ENCODE measurements at regions of chr19 and their contacts with region 1.

Region 1: GRCh38 chr19:2618611-2619010 is 83.9 kb downstream of the GNG7 start:
- DNase-seq: no peak
- ATAC-seq: peak in 1 of 2 experiments; percentile 53; a peak in 2 of 6 replicates
- H3K4me3 ChIP-seq: no peak overlapping the region
- H3K27ac ChIP-seq: peak overlapping the region in 1 of 2 experiments; percentile 28; a peak in 1 of 6 replicates
- H3K4me1 ChIP-seq: peaks cover 5% of the 10 kb centered on the region
- CTCF ChIP-seq: no peak
- EP300 ChIP-seq: no peak
- POLR2A ChIP-seq: no peak
- RAD21 ChIP-seq: no peak

Region 2: DNA sequence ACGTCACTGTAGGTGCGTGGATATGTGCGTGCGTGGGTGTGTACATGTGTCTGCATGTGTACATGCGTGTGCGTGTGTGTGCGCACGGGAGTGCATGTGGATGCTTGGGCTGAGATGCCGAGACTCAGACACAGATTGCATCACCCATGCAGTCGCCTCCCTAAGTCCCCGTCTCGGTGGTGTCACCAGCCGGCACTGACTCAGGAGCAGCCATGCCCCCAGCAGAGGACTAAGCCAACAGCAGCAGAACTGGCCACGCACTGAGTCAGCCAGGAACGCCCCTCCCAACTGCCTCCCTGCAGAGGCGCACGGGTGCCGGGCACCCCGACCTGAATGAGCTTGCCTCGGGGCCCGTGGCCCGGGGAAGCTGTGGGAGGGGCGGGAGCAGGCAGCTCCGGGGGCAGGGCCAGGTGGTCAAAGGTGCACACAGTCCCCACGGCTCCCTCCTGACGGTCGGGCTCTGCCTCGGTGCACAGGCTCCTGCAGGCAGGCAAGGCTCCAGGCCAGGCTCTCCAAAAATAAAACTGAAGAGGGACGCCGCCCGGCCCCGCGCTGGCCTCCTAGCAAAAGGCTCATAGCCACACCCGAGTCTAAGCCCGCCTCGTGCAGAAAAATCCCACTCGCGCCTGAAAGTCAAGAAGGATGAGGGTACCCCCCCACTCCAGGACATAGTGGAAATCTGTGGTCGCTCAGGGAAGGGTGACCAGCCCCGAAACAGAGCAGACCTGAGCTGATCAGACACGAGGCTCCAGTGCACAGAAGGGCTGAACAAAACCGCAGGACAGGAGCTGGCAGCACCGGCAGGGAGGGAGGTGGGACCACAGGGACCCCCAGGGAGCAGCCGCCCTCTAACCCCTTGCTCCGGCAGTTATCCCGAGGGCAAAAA is 93.5 kb before region 1 on chr19:
- CTCF ChIA-PET with region 1: no interaction called
- POLR2A ChIA-PET with region 1: no interaction called
- DNase-seq: peak; percentile 74 to 86
- ATAC-seq: peak; percentile 82 to 91
- H3K4me3 ChIP-seq: peak overlapping the region; percentile 31
- H3K27ac ChIP-seq: peak overlapping the region; percentile 97 to 99
- H3K4me1 ChIP-seq: peaks cover 53% of the 10 kb centered on the region
- CTCF ChIP-seq: no peak
- EP300 ChIP-seq: peak; percentile 59 to 77; a peak in 3 of 5 replicates
- POLR2A ChIP-seq: no peak
- RAD21 ChIP-seq: peak; percentile 4 to 36; a peak in 2 of 5 replicates

Region 3: GRCh38 chr19:2636897-2637683 is 18.5 kb after region 1 on chr19:
- CTCF ChIA-PET with region 1: interaction called, 50 read pairs
- POLR2A ChIA-PET with region 1: interaction called, 3 read pairs
- DNase-seq: peak; percentile 52 to 67
- ATAC-seq: peak; percentile 56 to 82
- H3K4me3 ChIP-seq: no peak overlapping the region
- H3K27ac ChIP-seq: peak overlapping the region in 1 of 2 experiments; percentile 52; a peak in 1 of 6 replicates
- H3K4me1 ChIP-seq: peaks cover 10% of the 10 kb centered on the region; the same call in 1 of the 3 replicates
- CTCF ChIP-seq: peak; percentile 62
- EP300 ChIP-seq: no peak
- POLR2A ChIP-seq: no peak
- RAD21 ChIP-seq: peak; percentile 73 to 81

Region 4: GRCh38 chr19:2739602-2740313 is 121.1 kb after region 1 on chr19 and contains the start of gene SLC39A3:
- CTCF ChIA-PET with region 1: no interaction called
- POLR2A ChIA-PET with region 1: no interaction called
- DNase-seq: peak; percentile 97 to 99
- ATAC-seq: peak; percentile 99 to 100
- H3K4me3 ChIP-seq: peak within 1 kb of the TSS; percentile 91
- H3K27ac ChIP-seq: peak within 1 kb of the TSS; percentile 74 to 96
- H3K4me1 ChIP-seq: 0 out of 3 replicates have a peak, but pooled peaks cover 3% of the 10 kb centered on the region
- CTCF ChIP-seq: no peak
- EP300 ChIP-seq: no peak
- POLR2A ChIP-seq: peak; percentile 48
- RAD21 ChIP-seq: no peak
- polyA plus RNA-seq, gene SLC39A3: 29.6 and 38.1 TPM in 2 replicates

Measured in A549 (cell line).